ENCODE measurements at regions of chr16 and their contacts with region 1.

Region 1: DNA sequence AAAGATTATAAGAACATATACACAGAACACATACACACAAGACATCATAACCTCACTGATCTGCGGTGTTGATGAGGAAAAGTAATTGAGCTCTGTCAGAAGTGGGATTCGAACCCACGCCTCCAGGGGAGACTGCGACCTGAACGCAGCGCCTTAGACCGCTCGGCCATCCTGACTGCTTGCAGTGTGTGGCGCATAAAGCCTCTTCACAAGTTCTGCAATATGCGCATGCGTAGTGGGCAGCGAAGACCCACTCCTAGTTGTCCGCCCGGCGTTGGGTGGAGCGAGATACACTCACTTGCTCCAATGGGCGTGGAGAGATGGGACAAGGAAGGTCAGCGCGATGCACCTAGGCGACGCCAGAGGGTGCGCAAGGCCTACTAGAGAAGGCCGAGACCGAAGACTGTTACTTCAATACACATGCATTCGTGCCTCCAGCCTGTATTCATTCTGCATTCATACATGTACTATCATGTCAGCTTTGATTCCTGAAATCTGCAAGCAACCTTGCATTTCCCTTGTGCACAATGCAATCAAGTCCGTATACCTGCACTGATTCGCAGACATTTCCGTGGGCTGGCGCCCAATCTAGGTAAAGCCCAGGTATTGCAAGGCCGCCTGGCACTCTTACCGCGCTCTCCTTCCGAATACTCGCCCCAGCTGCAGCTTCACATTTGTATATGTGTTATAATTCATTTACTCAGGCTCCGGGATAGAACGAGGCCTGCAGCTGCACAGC is 16.1 kb upstream of the PLLP start:
- DNase-seq: peak; percentile 98 to 100 (median 99)
- ATAC-seq: peak; percentile 96
- H3K4me3 ChIP-seq: peak overlapping the region; percentile 65
- H3K4me3 Mint-ChIP-seq: no peak overlapping the region
- H3K27ac ChIP-seq: peak overlapping the region; percentile 75
- H3K27ac Mint-ChIP-seq: no peak overlapping the region
- H3K4me1 ChIP-seq: peaks cover 16 to 28% of the 10 kb centered on the region in 2 donors
- H3K4me1 Mint-ChIP-seq: peaks cover 4 to 24% (median 11%) of the 10 kb centered on the region in 7 donors
- H3K27me3 ChIP-seq: no peaks in the 10 kb centered on the region
- H3K27me3 Mint-ChIP-seq: peaks cover 0 to 4% (median 0%) of the 10 kb centered on the region in 5 donors

Region 2: DNA sequence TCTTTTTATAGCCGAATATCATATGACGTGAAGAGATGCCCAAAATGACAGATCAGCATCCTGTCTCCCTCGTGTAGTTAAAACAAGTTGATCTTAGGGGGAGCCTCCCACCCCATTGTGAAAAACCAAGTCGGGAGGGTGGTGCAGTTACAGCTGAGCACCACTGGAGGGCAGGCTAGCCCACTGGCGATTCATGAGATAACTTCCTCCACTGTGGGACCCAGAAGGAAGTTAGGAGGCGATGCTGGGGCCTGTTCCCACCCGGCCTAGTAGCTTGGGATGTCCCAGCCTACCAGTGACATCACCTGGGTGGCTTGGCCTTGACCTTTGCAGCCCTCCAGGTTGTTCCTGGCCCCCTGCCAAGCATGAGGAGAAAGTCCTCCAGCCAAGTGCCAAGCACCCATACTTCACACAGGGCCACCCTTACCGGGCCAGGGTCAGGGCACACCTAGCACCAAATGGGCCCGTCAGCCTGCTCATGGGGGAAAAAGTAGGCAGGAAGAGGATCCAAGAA is 216.2 kb before region 1 on chr16:
- CTCF ChIA-PET with region 1: no interaction called
- POLR2A ChIA-PET with region 1: no interaction called
- intact Hi-C with region 1: loop called in 1 of 2 experiments (anchors 1 kb)
- DNase-seq: peak; percentile 52 to 86 (median 80)
- ATAC-seq: peak; percentile 98
- H3K4me3 ChIP-seq: no peak overlapping the region
- H3K4me3 Mint-ChIP-seq: peak overlapping the region in 2 of 10 donors; percentile 3 to 37
- H3K27ac ChIP-seq: peak overlapping the region; percentile 72
- H3K27ac Mint-ChIP-seq: peak overlapping the region; percentile 19 to 97 (median 90)
- H3K4me1 ChIP-seq: peaks cover 11% of the 10 kb centered on the region in 2 donors
- H3K4me1 Mint-ChIP-seq: peaks cover 6 to 16% (median 14%) of the 10 kb centered on the region in 7 donors
- H3K27me3 ChIP-seq: no peaks in the 10 kb centered on the region
- H3K27me3 Mint-ChIP-seq: no peaks in the 10 kb centered on the region

Region 3: GRCh38 chr16:57265850-57266530 is 34.6 kb before region 1 on chr16:
- CTCF ChIA-PET with region 1: interaction called, 3 read pairs
- POLR2A ChIA-PET with region 1: interaction called, 12 read pairs
- intact Hi-C with region 1: loop called in 1 of 2 experiments (anchors 1 kb)
- DNase-seq: no peak
- ATAC-seq: no peak
- H3K4me3 ChIP-seq: peak overlapping the region; percentile 39
- H3K4me3 Mint-ChIP-seq: peak overlapping the region; percentile 63 to 81 (median 74)
- H3K27ac ChIP-seq: peak overlapping the region; percentile 74
- H3K27ac Mint-ChIP-seq: peak overlapping the region; percentile 36 to 99 (median 97)
- H3K4me1 ChIP-seq: peaks cover 14 to 50% of the 10 kb centered on the region in 2 donors
- H3K4me1 Mint-ChIP-seq: peaks cover 22 to 58% (median 52%) of the 10 kb centered on the region in 7 donors
- H3K27me3 ChIP-seq: no peaks in the 10 kb centered on the region
- H3K27me3 Mint-ChIP-seq: no peaks in the 10 kb centered on the region

Region 4: GRCh38 chr16:57416122-57416509 is 115.6 kb after region 1 on chr16:
- CTCF ChIA-PET with region 1: interaction called, 83 read pairs
- POLR2A ChIA-PET with region 1: interaction called, 33 read pairs
- intact Hi-C with region 1: loop called (anchors 1 kb)
- DNase-seq: no peak
- ATAC-seq: no peak
- H3K4me3 ChIP-seq: no peak overlapping the region
- H3K4me3 Mint-ChIP-seq: no peak overlapping the region
- H3K27ac ChIP-seq: no peak overlapping the region
- H3K27ac Mint-ChIP-seq: no peak overlapping the region
- H3K4me1 ChIP-seq: peaks cover 11 to 18% of the 10 kb centered on the region in 2 donors
- H3K4me1 Mint-ChIP-seq: peaks cover 17 to 29% (median 23%) of the 10 kb centered on the region in 7 donors
- H3K27me3 ChIP-seq: no peaks in the 10 kb centered on the region
- H3K27me3 Mint-ChIP-seq: no peaks in the 10 kb centered on the region

Region 5: GRCh38 chr16:57462209-57462977 is 161.8 kb after region 1 on chr16 and contains the start of gene POLR2C:
- CTCF ChIA-PET with region 1: no interaction called
- POLR2A ChIA-PET with region 1: no interaction called
- intact Hi-C with region 1: loop called in 1 of 2 experiments (anchors 1 kb)
- DNase-seq: peak; percentile 84 to 96 (median 92)
- ATAC-seq: peak; percentile 99
- H3K4me3 ChIP-seq: peak within 1 kb of the TSS; percentile 86
- H3K4me3 Mint-ChIP-seq: peak within 1 kb of the TSS; percentile 79 to 100 (median 98)
- H3K27ac ChIP-seq: peak within 1 kb of the TSS; percentile 77
- H3K27ac Mint-ChIP-seq: peak within 1 kb of the TSS; percentile 93 to 100 (median 99)
- H3K4me1 ChIP-seq: peaks cover 17 to 23% of the 10 kb centered on the region in 2 donors
- H3K4me1 Mint-ChIP-seq: peaks cover 19 to 45% (median 35%) of the 10 kb centered on the region in 7 donors
- H3K27me3 ChIP-seq: no peaks in the 10 kb centered on the region
- H3K27me3 Mint-ChIP-seq: no peaks in the 10 kb centered on the region
- total RNA-seq, gene POLR2C: 63.4 to 96.3 (median 81.4) TPM

Region 6: GRCh38 chr16:57535680-57536305 is 235.2 kb after region 1 on chr16:
- CTCF ChIA-PET with region 1: no interaction called
- POLR2A ChIA-PET with region 1: no interaction called
- intact Hi-C with region 1: loop called (anchors 1 to 5 kb)
- DNase-seq: peak; percentile 77 to 94 (median 87)
- ATAC-seq: peak; percentile 95
- H3K4me3 ChIP-seq: peak overlapping the region; percentile 44
- H3K4me3 Mint-ChIP-seq: peak overlapping the region; percentile 77 to 89 (median 82)
- H3K27ac ChIP-seq: peak overlapping the region; percentile 93
- H3K27ac Mint-ChIP-seq: peak overlapping the region; percentile 82 to 96 (median 94)
- H3K4me1 ChIP-seq: peaks cover 54 to 60% of the 10 kb centered on the region in 2 donors
- H3K4me1 Mint-ChIP-seq: peaks cover 57 to 79% (median 74%) of the 10 kb centered on the region in 7 donors
- H3K27me3 ChIP-seq: no peaks in the 10 kb centered on the region
- H3K27me3 Mint-ChIP-seq: no peaks in the 10 kb centered on the region

Measured in naive thymus-derived CD4-positive, alpha-beta T cell (primary cell).